ENCODE measurements at regions of chr4 and their contacts with region 1.

Region 1: DNA sequence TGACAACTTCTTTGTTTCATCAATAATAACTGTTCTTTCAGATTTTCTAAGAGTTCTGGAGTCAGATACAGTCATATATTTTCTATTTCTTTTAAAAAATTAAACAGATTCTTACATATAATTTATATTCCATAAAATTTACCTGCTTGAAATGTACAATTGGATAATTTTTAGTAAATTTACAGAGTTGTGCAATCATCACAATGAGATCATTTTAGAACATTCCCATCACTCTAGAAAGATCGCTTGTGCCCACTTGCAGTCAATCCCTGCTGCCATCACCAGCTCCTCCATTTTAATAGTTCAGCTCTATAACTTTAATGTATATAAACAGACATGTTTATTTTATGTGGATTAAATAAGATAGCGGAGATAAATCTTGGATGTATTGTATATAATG is 29.6 kb upstream of the PRSS48 start:
- DNase-seq: no peak
- ATAC-seq: no peak
- H3K4me3 Mint-ChIP-seq: no peak overlapping the region
- H3K27ac Mint-ChIP-seq: no peak overlapping the region
- H3K4me1 Mint-ChIP-seq: peaks cover 55% of the 10 kb centered on the region
- H3K27me3 Mint-ChIP-seq: no peaks in the 10 kb centered on the region
- CTCF ChIP-seq: no peak

Region 2: GRCh38 chr4:151195801-151196200 is 51.6 kb before region 1 on chr4:
- CTCF ChIA-PET with region 1: no interaction called
- POLR2A ChIA-PET with region 1: interaction called, 14 read pairs
- DNase-seq: no peak
- ATAC-seq: no peak
- H3K4me3 Mint-ChIP-seq: no peak overlapping the region
- H3K27ac Mint-ChIP-seq: no peak overlapping the region
- H3K4me1 Mint-ChIP-seq: no peaks in the 10 kb centered on the region
- H3K27me3 Mint-ChIP-seq: no peaks in the 10 kb centered on the region
- CTCF ChIP-seq: no peak

Measured in WTC11 (cell line).